ENCODE measurements at regions of chr1 and their contacts with region 1.

Region 1: DNA sequence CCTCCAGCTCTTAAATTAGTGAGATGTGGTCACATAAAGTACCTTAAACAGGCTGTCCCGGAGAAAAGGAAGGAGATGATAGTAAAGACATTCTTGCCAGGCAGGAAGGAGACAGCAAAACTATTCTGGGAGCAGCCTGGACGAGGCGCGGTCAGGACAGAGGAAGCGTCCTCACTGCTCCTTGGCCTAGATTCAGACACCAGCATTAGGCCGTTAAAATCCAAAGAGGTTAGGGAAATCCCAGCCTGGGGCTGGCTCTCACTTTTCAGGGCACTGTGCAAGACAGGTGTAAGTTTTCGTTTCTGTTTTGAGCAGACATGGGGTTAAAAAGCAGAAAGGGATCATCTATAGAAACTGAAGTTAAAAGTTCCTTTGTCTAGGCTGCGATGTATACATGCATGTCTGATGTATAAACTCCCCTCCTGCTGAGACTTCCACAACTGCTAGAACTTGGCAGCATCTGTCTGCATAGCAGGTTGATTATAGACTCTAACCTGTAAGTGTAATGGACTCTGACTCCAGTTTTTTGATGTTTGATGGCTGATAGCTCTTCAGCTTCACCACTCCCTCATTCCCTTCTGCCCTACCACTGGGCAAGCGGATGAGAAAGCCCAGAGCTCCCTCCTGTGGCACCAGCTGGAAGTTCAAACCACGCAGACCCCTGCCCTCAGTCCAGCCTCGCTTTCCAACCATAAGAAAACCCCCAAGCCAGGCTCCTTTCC is 21.5 kb downstream of the STPG1 start:
- DNase-seq: peak; percentile 72
- H3K4me3 ChIP-seq: no peak overlapping the region; a peak in 1 of 4 replicates
- H3K27ac ChIP-seq: peak overlapping the region in 1 of 2 experiments; percentile 37; a peak in 1 of 4 replicates
- H3K4me1 ChIP-seq: peaks cover 0 to 15% of the 10 kb centered on the region in 2 experiments; a peak in 3 of 4 replicates
- H3K27me3 ChIP-seq: no peaks in the 10 kb centered on the region
- CTCF ChIP-seq: peak; percentile 74
- EP300 ChIP-seq: no peak
- RAD21 ChIP-seq: peak; percentile 89

Region 2: GRCh38 chr1:24150234-24151174 is 241.5 kb before region 1 on chr1:
- CTCF ChIA-PET with region 1: interaction called, 62 read pairs
- POLR2A ChIA-PET with region 1: no interaction called
- DNase-seq: peak; percentile 86
- H3K4me3 ChIP-seq: peak overlapping the region; percentile 25 to 42; a peak in 3 of 4 replicates
- H3K27ac ChIP-seq: no peak overlapping the region
- H3K4me1 ChIP-seq: peaks cover 0 to 4% of the 10 kb centered on the region in 2 experiments; a peak in 1 of 4 replicates
- H3K27me3 ChIP-seq: no peaks in the 10 kb centered on the region; the same call in 1 of the 2 replicates
- CTCF ChIP-seq: peak; percentile 78
- EP300 ChIP-seq: no peak
- RAD21 ChIP-seq: peak; percentile 62

Region 3: DNA sequence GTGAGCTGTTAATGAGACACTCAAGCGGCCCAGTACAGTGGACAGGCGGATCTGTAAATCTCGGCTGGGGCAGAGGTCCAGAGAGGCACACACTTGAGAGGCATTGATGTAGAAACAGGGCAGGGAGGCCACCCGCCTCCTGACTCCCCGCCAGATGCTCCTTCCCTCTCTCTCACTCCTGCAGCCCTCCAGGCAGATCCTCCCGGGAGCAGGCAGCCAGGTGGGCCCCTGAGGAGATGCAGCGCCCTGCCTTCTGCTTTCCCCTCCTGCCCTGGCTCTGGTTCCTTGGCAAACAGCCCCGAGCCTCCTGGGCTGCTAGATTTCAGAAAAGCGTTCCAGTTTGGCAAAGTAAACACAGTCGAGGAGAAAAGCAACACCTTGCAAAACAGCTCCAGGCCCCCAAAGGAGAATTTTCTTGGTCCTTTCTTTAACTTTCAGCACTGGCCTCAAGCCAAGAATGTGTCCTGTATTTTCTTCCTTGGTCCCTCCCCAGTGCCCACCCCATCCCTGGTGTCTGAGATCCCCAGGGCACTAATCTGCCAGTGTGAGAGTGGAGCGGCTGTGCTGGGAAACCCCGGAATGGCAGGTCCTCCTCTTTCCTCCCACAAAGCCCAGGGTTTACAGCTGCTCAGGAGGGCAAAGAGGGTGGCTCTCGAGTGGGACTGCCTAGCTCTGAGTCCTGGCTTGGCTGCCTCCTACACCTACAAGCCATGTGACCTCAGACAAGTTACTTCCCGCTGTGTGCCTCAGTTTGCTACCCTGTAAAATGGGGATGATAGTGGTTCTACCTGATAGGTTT is 175.6 kb before region 1 on chr1:
- CTCF ChIA-PET with region 1: interaction called, 135 read pairs
- POLR2A ChIA-PET with region 1: no interaction called
- DNase-seq: peak; percentile 59
- H3K4me3 ChIP-seq: no peak overlapping the region
- H3K27ac ChIP-seq: no peak overlapping the region
- H3K4me1 ChIP-seq: peaks cover 0 to 8% of the 10 kb centered on the region in 2 experiments; a peak in 1 of 4 replicates
- H3K27me3 ChIP-seq: peaks cover 13% of the 10 kb centered on the region; the same call in 1 of the 2 replicates
- CTCF ChIP-seq: no peak
- EP300 ChIP-seq: no peak
- RAD21 ChIP-seq: no peak

Region 4: GRCh38 chr1:24250224-24250623 is 141.8 kb before region 1 on chr1:
- CTCF ChIA-PET with region 1: no interaction called
- POLR2A ChIA-PET with region 1: no interaction called
- DNase-seq: no peak
- H3K4me3 ChIP-seq: no peak overlapping the region; a peak in 1 of 4 replicates
- H3K27ac ChIP-seq: no peak overlapping the region
- H3K4me1 ChIP-seq: no peaks in the 10 kb centered on the region
- H3K27me3 ChIP-seq: no peaks in the 10 kb centered on the region
- CTCF ChIP-seq: no peak
- EP300 ChIP-seq: no peak
- RAD21 ChIP-seq: no peak

Region 5: DNA sequence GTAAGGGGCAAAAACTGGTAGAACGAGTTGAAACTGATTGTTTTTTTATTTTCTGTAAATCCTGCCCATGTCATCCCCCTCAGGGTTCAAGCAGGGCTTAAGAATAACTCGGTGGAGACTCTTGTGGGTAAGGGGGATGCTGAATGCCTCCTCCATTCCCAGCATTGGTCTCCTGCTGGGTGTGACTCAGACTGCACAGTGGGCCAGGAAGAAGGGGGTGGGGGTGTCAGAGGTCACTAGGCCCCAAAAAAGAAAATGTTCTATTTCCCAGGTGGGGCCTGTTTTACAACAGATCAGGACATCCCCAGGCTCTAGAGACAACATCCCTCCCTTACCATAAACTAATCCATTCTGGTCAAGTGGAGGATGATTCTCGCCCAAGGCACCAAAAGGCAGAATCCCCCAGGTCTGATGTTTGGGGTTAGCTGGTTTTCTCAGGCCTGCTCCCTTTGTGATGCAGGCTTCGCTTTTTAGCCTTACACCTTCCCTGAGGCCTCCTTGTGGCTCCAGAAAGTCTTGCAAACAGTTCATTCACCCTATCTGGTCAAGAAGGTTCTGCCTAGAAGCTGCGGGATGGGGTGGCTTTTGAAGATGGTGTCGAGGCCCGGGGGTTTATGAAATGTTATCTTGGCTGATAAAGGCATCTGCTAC is 83.6 kb before region 1 on chr1:
- CTCF ChIA-PET with region 1: interaction called, 13 read pairs
- POLR2A ChIA-PET with region 1: no interaction called
- DNase-seq: no peak
- H3K4me3 ChIP-seq: no peak overlapping the region
- H3K27ac ChIP-seq: no peak overlapping the region
- H3K4me1 ChIP-seq: no peaks in the 10 kb centered on the region; a peak in 1 of 4 replicates
- H3K27me3 ChIP-seq: peaks cover 5% of the 10 kb centered on the region; the same call in 1 of the 2 replicates
- CTCF ChIP-seq: peak; percentile 42
- EP300 ChIP-seq: no peak
- RAD21 ChIP-seq: peak; percentile 22; the same call in 1 of the 2 replicates

Region 6: DNA sequence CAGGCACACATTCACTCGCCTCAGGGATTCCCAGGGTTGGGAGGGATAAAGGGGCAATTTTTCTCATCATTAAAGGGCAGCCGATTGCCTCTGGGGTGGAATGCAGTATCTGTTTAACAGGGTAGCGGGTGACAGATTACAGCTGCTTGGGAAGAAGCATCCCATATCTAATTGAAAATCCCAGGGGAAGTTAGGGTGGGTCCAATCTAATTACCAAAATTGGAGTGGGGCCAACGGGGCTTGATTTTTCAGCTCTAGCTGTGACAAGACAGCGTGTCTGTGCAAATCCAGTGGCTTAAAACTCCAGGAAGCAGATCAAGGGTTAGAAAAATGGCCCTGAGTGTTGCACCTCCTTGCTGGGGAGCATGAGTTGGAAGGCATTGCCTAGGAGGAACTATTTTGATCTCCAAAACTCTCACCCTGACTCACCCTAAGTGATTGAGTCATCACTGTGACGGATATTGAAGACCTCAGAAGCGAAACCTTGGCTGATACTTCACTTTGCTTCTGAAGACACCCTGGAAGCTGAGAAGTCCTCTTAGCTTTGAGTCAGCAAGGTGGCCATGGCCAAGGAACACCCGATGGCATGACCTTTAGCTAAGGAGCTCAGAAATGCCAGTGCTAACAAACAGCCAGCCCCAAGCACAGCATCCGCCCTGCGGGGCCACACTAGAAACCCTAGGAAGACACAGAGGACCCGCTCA is 26.9 kb before region 1 on chr1:
- CTCF ChIA-PET with region 1: interaction called, 33 read pairs
- POLR2A ChIA-PET with region 1: no interaction called
- DNase-seq: peak; percentile 76
- H3K4me3 ChIP-seq: no peak overlapping the region
- H3K27ac ChIP-seq: peak overlapping the region; percentile 22 to 73; a peak in 3 of 4 replicates
- H3K4me1 ChIP-seq: peaks cover 11 to 15% of the 10 kb centered on the region in 2 experiments
- H3K27me3 ChIP-seq: no peaks in the 10 kb centered on the region
- CTCF ChIP-seq: no peak
- EP300 ChIP-seq: peak; percentile 25 to 53; a peak in 2 of 4 replicates
- RAD21 ChIP-seq: no peak

Region 7: GRCh38 chr1:24586970-24587820 is 195.2 kb after region 1 on chr1:
- CTCF ChIA-PET with region 1: interaction called, 37 read pairs
- POLR2A ChIA-PET with region 1: no interaction called
- DNase-seq: peak; percentile 73
- H3K4me3 ChIP-seq: no peak overlapping the region; a peak in 1 of 4 replicates
- H3K27ac ChIP-seq: no peak overlapping the region
- H3K4me1 ChIP-seq: no peaks in the 10 kb centered on the region
- H3K27me3 ChIP-seq: no peaks in the 10 kb centered on the region
- CTCF ChIP-seq: peak; percentile 81
- EP300 ChIP-seq: no peak
- RAD21 ChIP-seq: peak; percentile 68

Region 8: DNA sequence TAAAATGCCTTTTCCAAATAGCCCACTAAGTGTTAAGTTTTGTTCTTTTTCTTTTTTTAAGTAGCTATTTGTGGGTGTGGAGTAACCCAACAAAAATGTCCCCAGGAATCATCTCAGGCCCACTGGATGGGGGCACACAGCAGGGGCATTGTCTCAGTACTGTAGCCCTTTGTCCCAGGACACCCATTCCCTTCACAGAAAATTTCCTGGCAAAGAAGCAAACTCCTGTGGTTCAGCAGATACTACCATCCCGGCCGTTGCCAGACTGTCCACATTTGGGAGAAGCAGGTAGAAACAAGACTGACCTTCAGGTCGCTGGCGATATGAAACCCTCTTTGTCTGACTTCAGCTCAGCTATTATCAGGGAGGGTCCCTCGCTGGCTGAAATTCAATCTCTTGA is 227.3 kb after region 1 on chr1:
- CTCF ChIA-PET with region 1: no interaction called
- POLR2A ChIA-PET with region 1: no interaction called
- DNase-seq: no peak
- H3K4me3 ChIP-seq: no peak overlapping the region
- H3K27ac ChIP-seq: no peak overlapping the region
- H3K4me1 ChIP-seq: no peaks in the 10 kb centered on the region
- H3K27me3 ChIP-seq: no peaks in the 10 kb centered on the region; the same call in 1 of the 2 replicates
- CTCF ChIP-seq: no peak
- EP300 ChIP-seq: no peak
- RAD21 ChIP-seq: no peak

Measured in SK-N-SH (cell line).